WTC11 (cell line): ENCODE measurements at regions of chr14 and their contacts with region 1.

Region 1: DNA sequence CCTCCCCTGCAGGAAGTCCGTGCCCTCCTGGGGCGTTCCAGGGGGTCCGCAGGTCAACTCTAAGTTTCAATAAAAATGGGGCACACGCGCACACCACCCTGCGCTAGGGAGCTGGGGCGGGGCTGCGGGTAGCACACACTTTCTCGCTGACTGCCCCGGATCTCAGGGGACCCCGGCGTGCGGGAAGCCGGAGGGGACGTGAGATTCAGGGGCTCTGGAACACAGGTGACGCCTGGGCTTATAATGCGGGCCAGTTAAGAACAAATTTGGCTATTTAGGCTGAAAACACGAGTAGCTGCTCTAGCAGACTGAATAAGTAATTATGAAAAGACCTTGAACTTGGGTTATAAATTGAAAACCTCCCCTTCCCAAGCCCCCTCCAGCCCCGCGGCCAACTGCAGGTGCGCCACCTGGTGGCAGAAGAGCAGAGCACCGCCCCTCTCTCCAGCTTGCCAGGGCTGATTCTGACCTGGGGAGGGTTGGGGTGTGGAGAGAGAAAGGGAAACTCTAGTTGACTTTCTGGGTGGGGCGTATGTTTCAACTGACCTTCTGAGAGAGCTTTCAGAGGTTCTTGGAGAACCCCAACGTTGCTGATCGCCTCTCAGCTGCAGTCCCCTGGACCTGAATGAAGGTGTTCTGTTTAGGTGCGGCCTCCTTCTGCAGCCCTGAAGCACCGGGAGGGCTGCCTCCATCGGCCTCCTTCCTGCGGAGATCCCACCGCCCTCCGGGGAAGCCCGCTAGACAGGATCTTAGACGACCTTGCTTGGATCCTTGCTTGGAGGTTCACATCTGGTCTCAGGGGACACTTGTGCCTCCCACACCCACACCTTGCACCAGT is 118.4 kb upstream of the EVL start:
- DNase-seq: peak; percentile 75
- ATAC-seq: peak; percentile 82
- H3K4me3 Mint-ChIP-seq: peak overlapping the region; percentile 73
- H3K27ac Mint-ChIP-seq: no peak overlapping the region
- H3K4me1 Mint-ChIP-seq: peaks cover 11% of the 10 kb centered on the region
- H3K27me3 Mint-ChIP-seq: peaks cover 10% of the 10 kb centered on the region
- CTCF ChIP-seq: peak; percentile 95

Region 2: DNA sequence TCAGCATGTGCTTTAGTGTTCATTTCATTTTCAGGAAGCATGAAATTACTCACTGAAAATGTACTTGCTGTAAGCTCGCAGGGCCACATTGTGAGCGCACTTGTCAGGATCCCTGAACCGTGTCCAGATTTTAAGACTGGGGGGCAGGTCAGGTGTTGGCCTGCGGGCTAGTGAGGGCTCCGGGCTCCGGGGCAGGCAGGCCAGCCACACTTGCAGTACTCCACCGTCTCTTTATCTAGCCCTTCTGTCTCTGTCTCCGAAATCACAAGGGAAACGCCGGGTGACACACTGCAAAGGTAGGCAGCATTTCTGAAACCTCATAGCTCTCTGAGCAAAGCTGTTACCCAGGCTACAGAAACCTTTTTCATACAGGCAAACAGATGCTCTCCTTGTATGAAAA is 55.0 kb before region 1 on chr14:
- CTCF ChIA-PET with region 1: interaction called, 10 read pairs
- POLR2A ChIA-PET with region 1: no interaction called
- DNase-seq: no peak
- ATAC-seq: no peak
- H3K4me3 Mint-ChIP-seq: no peak overlapping the region
- H3K27ac Mint-ChIP-seq: no peak overlapping the region
- H3K4me1 Mint-ChIP-seq: peaks cover 46% of the 10 kb centered on the region
- H3K27me3 Mint-ChIP-seq: no peaks in the 10 kb centered on the region; the same call in 1 of the 2 replicates
- CTCF ChIP-seq: no peak